ENCODE measurements at regions of chr15 and their contacts with region 1.

Region 1: GRCh38 chr15:92069308-92070250 is 216.1 kb downstream of the SLCO3A1 start:
- DNase-seq: peak; percentile 73
- ATAC-seq: peak; percentile 91
- H3K4me3 Mint-ChIP-seq: peak overlapping the region; percentile 61
- H3K27ac Mint-ChIP-seq: peak overlapping the region; percentile 59
- H3K4me1 Mint-ChIP-seq: peaks cover 42% of the 10 kb centered on the region
- H3K27me3 Mint-ChIP-seq: no peaks in the 10 kb centered on the region

Region 2: GRCh38 chr15:92011611-92012367 is 57.8 kb before region 1 on chr15:
- CTCF ChIA-PET with region 1: no interaction called
- POLR2A ChIA-PET with region 1: interaction called, 3 read pairs
- intact Hi-C with region 1: loop called (anchors 5 kb)
- DNase-seq: peak; percentile 69
- ATAC-seq: peak; percentile 88
- H3K4me3 Mint-ChIP-seq: peak overlapping the region; percentile 53
- H3K27ac Mint-ChIP-seq: peak overlapping the region; percentile 73
- H3K4me1 Mint-ChIP-seq: peaks cover 73% of the 10 kb centered on the region
- H3K27me3 Mint-ChIP-seq: no peaks in the 10 kb centered on the region

Region 3: DNA sequence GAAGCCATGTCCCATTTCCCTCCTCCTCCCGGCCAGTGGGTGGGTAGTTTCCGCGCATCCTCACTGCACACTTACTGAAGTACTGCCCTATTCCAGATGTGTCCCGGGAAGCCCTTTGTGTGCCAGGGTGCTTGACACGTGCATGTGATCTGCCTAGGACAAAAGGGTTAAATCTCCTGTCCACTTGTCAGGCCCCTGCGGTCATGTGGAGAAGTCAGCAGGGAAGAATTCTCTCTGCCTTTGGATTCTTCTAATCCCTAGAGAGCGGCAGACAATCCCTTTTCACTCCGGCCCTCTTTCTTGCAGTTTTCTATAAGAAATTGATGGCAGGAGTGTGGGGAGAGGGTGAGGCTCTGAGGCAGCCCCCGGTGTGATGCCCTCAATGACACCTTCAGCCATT is 343.9 kb after region 1 on chr15:
- CTCF ChIA-PET with region 1: no interaction called
- POLR2A ChIA-PET with region 1: no interaction called
- intact Hi-C with region 1: no loop called
- DNase-seq: no peak
- ATAC-seq: no peak
- H3K4me3 Mint-ChIP-seq: no peak overlapping the region
- H3K27ac Mint-ChIP-seq: no peak overlapping the region
- H3K4me1 Mint-ChIP-seq: no peaks in the 10 kb centered on the region
- H3K27me3 Mint-ChIP-seq: peaks cover 17% of the 10 kb centered on the region